ENCODE measurements at regions of chr1 and their contacts with region 1.

Region 1: DNA sequence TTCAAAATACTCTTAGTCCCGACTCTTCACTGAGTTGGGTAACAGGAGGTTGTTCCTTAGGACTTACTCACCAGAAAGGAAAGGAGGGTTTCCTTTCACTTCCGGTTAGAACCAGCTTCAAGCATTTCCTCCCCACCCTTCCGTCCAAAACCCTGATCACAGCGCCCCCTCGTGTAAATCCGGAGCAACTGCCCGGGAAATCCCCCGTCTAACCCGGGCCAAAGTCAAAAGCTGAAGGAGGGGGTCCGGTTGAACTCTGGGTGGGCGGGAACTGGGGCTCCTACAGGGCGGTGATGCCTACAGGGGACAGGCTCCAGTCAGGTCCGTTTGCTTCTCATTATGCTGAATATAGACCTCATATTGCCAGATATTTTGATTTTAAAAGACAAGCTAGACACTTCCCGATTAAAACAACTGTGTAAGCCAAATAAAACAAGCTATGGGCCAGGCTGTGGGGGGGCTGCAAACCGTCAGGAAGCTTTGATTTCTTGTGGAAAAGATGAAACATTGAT is 15.0 kb upstream of the MTARC2 start:
- DNase-seq: peak; percentile 53 to 74 (median 72)
- ATAC-seq: peak; percentile 96
- H3K4me3 ChIP-seq: peak overlapping the region; percentile 20
- H3K4me3 Mint-ChIP-seq: peak overlapping the region; percentile 29 to 74 (median 64)
- H3K27ac ChIP-seq: peak overlapping the region; percentile 17
- H3K27ac Mint-ChIP-seq: peak overlapping the region in 4 of 9 donors; percentile 17 to 85 (median 50)
- H3K4me1 ChIP-seq: peaks cover 4 to 14% of the 10 kb centered on the region in 2 donors
- H3K4me1 Mint-ChIP-seq: peaks cover 8 to 23% (median 18%) of the 10 kb centered on the region in 7 donors
- H3K27me3 ChIP-seq: no peaks in the 10 kb centered on the region
- H3K27me3 Mint-ChIP-seq: peaks cover 0 to 10% (median 0%) of the 10 kb centered on the region in 5 donors

Region 2: GRCh38 chr1:219442611-219443061 is 1290.5 kb before region 1 on chr1:
- CTCF ChIA-PET with region 1: no interaction called
- POLR2A ChIA-PET with region 1: no interaction called
- intact Hi-C with region 1: no loop called
- DNase-seq: no peak
- ATAC-seq: no peak
- H3K4me3 ChIP-seq: no peak overlapping the region
- H3K4me3 Mint-ChIP-seq: no peak overlapping the region
- H3K27ac ChIP-seq: no peak overlapping the region
- H3K27ac Mint-ChIP-seq: no peak overlapping the region
- H3K4me1 ChIP-seq: no peaks in the 10 kb centered on the region
- H3K4me1 Mint-ChIP-seq: no peaks in the 10 kb centered on the region
- H3K27me3 ChIP-seq: no peaks in the 10 kb centered on the region
- H3K27me3 Mint-ChIP-seq: peaks cover 0 to 8% (median 0%) of the 10 kb centered on the region in 5 donors

Region 3: GRCh38 chr1:219837274-219837993 is 895.7 kb before region 1 on chr1:
- CTCF ChIA-PET with region 1: no interaction called
- POLR2A ChIA-PET with region 1: no interaction called
- intact Hi-C with region 1: loop called in 1 of 2 experiments (anchors 5 kb)
- DNase-seq: no peak
- ATAC-seq: no peak
- H3K4me3 ChIP-seq: no peak overlapping the region
- H3K4me3 Mint-ChIP-seq: no peak overlapping the region
- H3K27ac ChIP-seq: no peak overlapping the region
- H3K27ac Mint-ChIP-seq: no peak overlapping the region
- H3K4me1 ChIP-seq: no peaks in the 10 kb centered on the region
- H3K4me1 Mint-ChIP-seq: no peaks in the 10 kb centered on the region
- H3K27me3 ChIP-seq: no peaks in the 10 kb centered on the region
- H3K27me3 Mint-ChIP-seq: peaks cover 0 to 34% (median 15%) of the 10 kb centered on the region in 5 donors

Region 4: GRCh38 chr1:220113136-220113695 is 619.9 kb before region 1 on chr1:
- CTCF ChIA-PET with region 1: no interaction called
- POLR2A ChIA-PET with region 1: no interaction called
- intact Hi-C with region 1: loop called in 1 of 2 experiments (anchors 2 kb)
- DNase-seq: peak in 7 of 9 donors; percentile 16 to 51 (median 30)
- ATAC-seq: peak; percentile 86
- H3K4me3 ChIP-seq: no peak overlapping the region
- H3K4me3 Mint-ChIP-seq: peak overlapping the region in 6 of 10 donors; percentile 2 to 57 (median 28)
- H3K27ac ChIP-seq: no peak overlapping the region
- H3K27ac Mint-ChIP-seq: peak overlapping the region in 2 of 9 donors; percentile 6 to 72
- H3K4me1 ChIP-seq: no peaks in the 10 kb centered on the region
- H3K4me1 Mint-ChIP-seq: peaks cover 0 to 10% (median 5%) of the 10 kb centered on the region in 7 donors
- H3K27me3 ChIP-seq: no peaks in the 10 kb centered on the region
- H3K27me3 Mint-ChIP-seq: no peaks in the 10 kb centered on the region

Region 5: DNA sequence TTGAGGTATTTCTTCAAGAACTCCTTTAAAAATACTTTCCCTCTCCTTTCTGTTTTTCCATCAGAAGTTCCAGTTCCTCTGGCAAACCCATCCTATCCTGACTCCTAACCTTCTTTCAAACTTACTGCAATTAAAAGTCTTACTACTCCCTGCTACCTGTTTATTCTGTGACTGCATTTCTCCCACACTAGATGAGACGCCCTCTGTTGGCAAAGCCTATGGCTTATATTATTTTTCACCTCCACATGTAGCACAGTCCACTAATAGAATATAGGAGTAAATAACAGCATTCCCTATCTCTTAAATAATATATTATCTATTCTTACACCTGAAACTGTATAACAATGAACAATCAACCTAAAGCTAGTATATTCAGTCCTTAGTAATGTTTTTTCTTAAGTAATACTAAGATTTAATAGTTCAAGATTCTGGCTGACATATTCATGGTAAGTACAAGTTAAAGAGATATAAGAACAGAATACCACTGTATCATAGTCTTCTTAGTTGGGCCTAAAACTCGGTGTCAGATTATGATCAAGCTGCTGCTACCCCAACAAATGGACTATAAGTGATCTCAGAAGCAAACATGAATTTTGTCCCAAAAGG is 515.7 kb before region 1 on chr1:
- CTCF ChIA-PET with region 1: interaction called, 5 read pairs
- POLR2A ChIA-PET with region 1: no interaction called
- intact Hi-C with region 1: loop called (anchors 1 to 10 kb)
- DNase-seq: no peak
- ATAC-seq: no peak
- H3K4me3 ChIP-seq: no peak overlapping the region
- H3K4me3 Mint-ChIP-seq: peak overlapping the region in 1 of 10 donors; percentile 33
- H3K27ac ChIP-seq: no peak overlapping the region
- H3K27ac Mint-ChIP-seq: peak overlapping the region in 2 of 9 donors; percentile 28 to 52
- H3K4me1 ChIP-seq: no peaks in the 10 kb centered on the region
- H3K4me1 Mint-ChIP-seq: peaks cover 3 to 37% (median 25%) of the 10 kb centered on the region in 7 donors
- H3K27me3 ChIP-seq: no peaks in the 10 kb centered on the region
- H3K27me3 Mint-ChIP-seq: no peaks in the 10 kb centered on the region

Region 6: GRCh38 chr1:220294846-220295301 is 438.3 kb before region 1 on chr1:
- CTCF ChIA-PET with region 1: interaction called, 5 read pairs
- POLR2A ChIA-PET with region 1: no interaction called
- intact Hi-C with region 1: loop called (anchors 1 kb)
- DNase-seq: no peak
- ATAC-seq: no peak
- H3K4me3 ChIP-seq: no peak overlapping the region
- H3K4me3 Mint-ChIP-seq: no peak overlapping the region
- H3K27ac ChIP-seq: no peak overlapping the region
- H3K27ac Mint-ChIP-seq: no peak overlapping the region
- H3K4me1 ChIP-seq: no peaks in the 10 kb centered on the region
- H3K4me1 Mint-ChIP-seq: peaks cover 0 to 5% (median 0%) of the 10 kb centered on the region in 7 donors
- H3K27me3 ChIP-seq: no peaks in the 10 kb centered on the region
- H3K27me3 Mint-ChIP-seq: peaks cover 10 to 35% (median 24%) of the 10 kb centered on the region in 5 donors

Region 7: DNA sequence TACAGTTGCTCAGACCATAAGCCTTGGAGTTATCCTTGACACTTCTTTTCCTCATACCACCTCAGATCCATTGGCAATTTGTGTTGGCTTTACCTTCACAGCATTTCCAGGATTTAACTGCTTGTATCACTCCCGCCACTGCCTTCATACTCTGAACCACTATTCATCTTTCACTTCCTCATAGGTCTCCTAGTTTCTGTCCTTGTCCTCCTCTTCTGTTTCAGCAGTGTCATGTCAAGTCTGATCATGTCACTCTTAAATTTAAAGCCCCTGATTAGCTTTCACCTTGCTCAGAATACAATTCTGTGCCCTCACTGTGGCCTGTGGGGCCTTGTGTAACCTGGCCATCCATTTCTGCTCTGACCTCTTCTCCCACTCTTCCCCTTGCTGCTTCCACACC is 77.6 kb before region 1 on chr1:
- CTCF ChIA-PET with region 1: no interaction called
- POLR2A ChIA-PET with region 1: no interaction called
- intact Hi-C with region 1: no loop called
- DNase-seq: no peak
- ATAC-seq: no peak
- H3K4me3 ChIP-seq: no peak overlapping the region
- H3K4me3 Mint-ChIP-seq: no peak overlapping the region
- H3K27ac ChIP-seq: no peak overlapping the region
- H3K27ac Mint-ChIP-seq: no peak overlapping the region
- H3K4me1 ChIP-seq: no peaks in the 10 kb centered on the region
- H3K4me1 Mint-ChIP-seq: no peaks in the 10 kb centered on the region
- H3K27me3 ChIP-seq: no peaks in the 10 kb centered on the region
- H3K27me3 Mint-ChIP-seq: peaks cover under 1 to 12% (median 7%) of the 10 kb centered on the region in 5 donors

Region 8: DNA sequence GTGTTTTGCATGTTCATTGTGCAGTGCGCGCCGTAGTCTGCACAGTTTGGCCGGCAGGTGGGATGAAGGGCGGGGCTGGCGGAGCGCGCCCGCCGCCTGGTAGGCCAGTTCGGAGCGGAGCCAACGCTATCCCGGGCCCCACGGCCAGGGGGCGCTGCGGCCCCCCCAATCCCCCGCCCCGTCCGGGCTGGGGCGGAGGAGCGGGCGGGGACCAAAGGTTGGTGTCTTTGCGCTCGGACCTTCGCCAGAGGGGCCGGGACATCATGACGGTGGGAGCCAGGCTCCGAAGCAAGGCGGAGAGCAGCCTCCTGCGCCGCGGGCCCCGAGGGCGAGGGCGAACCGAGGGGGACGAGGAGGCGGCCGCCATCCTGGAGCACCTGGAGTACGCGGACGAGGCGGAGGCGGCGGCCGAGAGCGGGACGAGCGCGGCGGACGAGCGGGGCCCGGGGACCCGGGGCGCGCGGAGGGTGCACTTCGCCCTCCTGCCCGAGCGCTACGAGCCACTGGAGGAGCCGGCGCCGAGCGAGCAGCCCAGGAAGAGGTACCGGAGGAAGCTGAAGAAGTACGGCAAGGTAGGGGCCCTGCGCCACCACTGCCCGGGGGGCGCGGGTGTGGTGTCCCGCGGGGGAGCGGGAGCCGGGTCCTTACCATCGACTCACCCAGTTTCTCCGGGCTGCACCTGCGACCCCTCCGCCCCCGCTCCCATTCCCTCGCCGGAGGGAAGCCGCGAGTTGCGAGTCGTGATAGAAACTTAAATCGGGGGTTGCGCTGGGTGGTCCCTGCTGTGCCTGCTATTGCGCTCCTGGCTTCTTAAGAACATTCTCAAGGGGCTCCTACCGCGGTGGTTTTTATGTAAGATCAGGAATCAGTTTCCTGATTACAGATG is 42.8 kb before region 1 on chr1 and contains the start of gene C1orf115:
- CTCF ChIA-PET with region 1: interaction called, 9 read pairs
- POLR2A ChIA-PET with region 1: no interaction called
- intact Hi-C with region 1: loop called (anchors 1 kb)
- DNase-seq: peak; percentile 57 to 81 (median 71)
- ATAC-seq: peak; percentile 99
- H3K4me3 ChIP-seq: peak within 1 kb of the TSS; percentile 58
- H3K4me3 Mint-ChIP-seq: peak within 1 kb of the TSS; percentile 71 to 89 (median 86)
- H3K27ac ChIP-seq: peak within 1 kb of the TSS; percentile 43
- H3K27ac Mint-ChIP-seq: peak within 1 kb of the TSS in 3 of 9 donors; percentile 22 to 52 (median 32)
- H3K4me1 ChIP-seq: peaks cover 5 to 8% of the 10 kb centered on the region in 2 donors
- H3K4me1 Mint-ChIP-seq: peaks cover 5 to 14% (median 7%) of the 10 kb centered on the region in 7 donors
- H3K27me3 ChIP-seq: no peaks in the 10 kb centered on the region
- H3K27me3 Mint-ChIP-seq: peaks cover 5 to 32% (median 11%) of the 10 kb centered on the region in 5 donors
- total RNA-seq, gene C1orf115: 0.17 to 2.1 (median 1.5) TPM